GM12878 (cell line): ENCODE measurements at regions of chr3 and their contacts with region 1.

Region 1: DNA sequence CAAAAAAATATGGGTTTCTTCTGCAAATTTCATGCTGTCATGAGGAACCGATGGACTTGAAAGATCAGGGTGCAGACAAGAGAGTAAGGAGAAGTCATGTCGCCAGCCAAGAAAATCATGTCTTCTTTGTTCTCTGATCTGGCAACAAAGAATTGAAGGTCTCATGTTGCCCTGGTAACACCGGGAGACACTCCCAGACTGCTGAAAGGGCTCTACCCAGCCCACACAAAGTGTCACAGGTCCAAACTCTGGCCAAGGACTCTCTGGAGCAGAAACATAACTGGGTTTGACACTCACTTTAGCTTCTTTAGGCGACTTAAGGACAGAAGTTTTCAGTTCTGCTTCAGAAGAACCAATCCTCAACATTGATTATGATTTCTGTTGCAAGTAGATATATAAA is 42.9 kb downstream of the SIDT1 start:
- DNase-seq: no peak
- ATAC-seq: no peak
- H3K4me3 ChIP-seq: no peak overlapping the region
- H3K27ac ChIP-seq: no peak overlapping the region
- H3K4me1 ChIP-seq: no peaks in the 10 kb centered on the region
- H3K27me3 ChIP-seq: no peaks in the 10 kb centered on the region
- CTCF ChIP-seq: no peak
- EP300 ChIP-seq: no peak
- POLR2A ChIP-seq: no peak
- RAD21 ChIP-seq: no peak

Region 2: DNA sequence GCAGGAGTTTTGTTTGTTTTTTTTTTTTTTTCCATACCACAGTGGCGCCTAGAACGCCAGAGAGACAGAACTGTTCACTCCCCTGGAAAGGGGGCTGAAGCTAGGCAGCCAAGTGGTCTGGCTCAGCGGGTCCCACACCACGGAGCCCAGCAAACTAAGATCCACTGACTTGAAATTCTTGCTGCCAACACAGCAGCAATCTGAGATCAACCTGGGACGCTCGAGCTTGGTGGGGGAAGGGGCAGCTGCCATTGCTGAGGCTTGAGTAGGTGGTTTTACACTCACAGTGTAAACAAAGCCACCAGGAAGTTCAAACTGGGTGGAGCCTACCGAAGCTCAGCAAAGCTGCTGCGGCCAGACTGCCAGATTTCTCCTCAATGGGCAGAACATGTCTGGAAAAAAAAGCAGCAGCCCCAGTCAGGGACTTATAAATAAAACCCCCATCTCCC is 90.0 kb before region 1 on chr3:
- CTCF ChIA-PET with region 1: interaction called, 13 read pairs
- POLR2A ChIA-PET with region 1: no interaction called
- RAD21 ChIA-PET with region 1: interaction called, 3 read pairs
- SMC1A ChIA-PET with region 1: interaction called, 9 read pairs
- in situ Hi-C with region 1: loop called (anchors 5 kb)
- intact Hi-C with region 1: no loop called
- DNase-seq: no peak
- ATAC-seq: no peak
- H3K4me3 ChIP-seq: no peak overlapping the region
- H3K27ac ChIP-seq: no peak overlapping the region
- H3K4me1 ChIP-seq: no peaks in the 10 kb centered on the region
- H3K27me3 ChIP-seq: no peaks in the 10 kb centered on the region
- CTCF ChIP-seq: no peak
- EP300 ChIP-seq: no peak
- POLR2A ChIP-seq: no peak
- RAD21 ChIP-seq: no peak

Region 3: GRCh38 chr3:113514265-113514769 is 60.9 kb before region 1 on chr3:
- CTCF ChIA-PET with region 1: interaction called, 49 read pairs
- POLR2A ChIA-PET with region 1: interaction called, 3 read pairs
- RAD21 ChIA-PET with region 1: interaction called, 33 read pairs
- SMC1A ChIA-PET with region 1: interaction called, 39 read pairs
- in situ Hi-C with region 1: no loop called
- intact Hi-C with region 1: no loop called
- DNase-seq: no peak
- ATAC-seq: peak; percentile 9
- H3K4me3 ChIP-seq: peak overlapping the region; percentile 87
- H3K27ac ChIP-seq: peak overlapping the region; percentile 76
- H3K4me1 ChIP-seq: peaks cover 12% of the 10 kb centered on the region
- H3K27me3 ChIP-seq: no peaks in the 10 kb centered on the region
- CTCF ChIP-seq: no peak
- EP300 ChIP-seq: 0 out of 4 replicates have a peak, but pooled peaks of 1 of the 2 experiments have one; percentile 35
- POLR2A ChIP-seq: no peak
- RAD21 ChIP-seq: no peak

Region 4: GRCh38 chr3:113546414-113546893 is 28.8 kb before region 1 on chr3:
- CTCF ChIA-PET with region 1: interaction called, 22 read pairs
- POLR2A ChIA-PET with region 1: no interaction called
- RAD21 ChIA-PET with region 1: interaction called, 7 read pairs
- SMC1A ChIA-PET with region 1: interaction called, 11 read pairs
- in situ Hi-C with region 1: no loop called
- intact Hi-C with region 1: no loop called
- DNase-seq: peak; percentile 57
- ATAC-seq: peak; percentile 88
- H3K4me3 ChIP-seq: peak overlapping the region; percentile 52; the same call in 1 of the 2 replicates
- H3K27ac ChIP-seq: peak overlapping the region; percentile 76
- H3K4me1 ChIP-seq: peaks cover 26% of the 10 kb centered on the region
- H3K27me3 ChIP-seq: no peaks in the 10 kb centered on the region
- CTCF ChIP-seq: no peak
- EP300 ChIP-seq: 0 out of 4 replicates have a peak, but pooled peaks of 1 of the 2 experiments have one; percentile 39
- POLR2A ChIP-seq: no peak
- RAD21 ChIP-seq: no peak

Region 5: DNA sequence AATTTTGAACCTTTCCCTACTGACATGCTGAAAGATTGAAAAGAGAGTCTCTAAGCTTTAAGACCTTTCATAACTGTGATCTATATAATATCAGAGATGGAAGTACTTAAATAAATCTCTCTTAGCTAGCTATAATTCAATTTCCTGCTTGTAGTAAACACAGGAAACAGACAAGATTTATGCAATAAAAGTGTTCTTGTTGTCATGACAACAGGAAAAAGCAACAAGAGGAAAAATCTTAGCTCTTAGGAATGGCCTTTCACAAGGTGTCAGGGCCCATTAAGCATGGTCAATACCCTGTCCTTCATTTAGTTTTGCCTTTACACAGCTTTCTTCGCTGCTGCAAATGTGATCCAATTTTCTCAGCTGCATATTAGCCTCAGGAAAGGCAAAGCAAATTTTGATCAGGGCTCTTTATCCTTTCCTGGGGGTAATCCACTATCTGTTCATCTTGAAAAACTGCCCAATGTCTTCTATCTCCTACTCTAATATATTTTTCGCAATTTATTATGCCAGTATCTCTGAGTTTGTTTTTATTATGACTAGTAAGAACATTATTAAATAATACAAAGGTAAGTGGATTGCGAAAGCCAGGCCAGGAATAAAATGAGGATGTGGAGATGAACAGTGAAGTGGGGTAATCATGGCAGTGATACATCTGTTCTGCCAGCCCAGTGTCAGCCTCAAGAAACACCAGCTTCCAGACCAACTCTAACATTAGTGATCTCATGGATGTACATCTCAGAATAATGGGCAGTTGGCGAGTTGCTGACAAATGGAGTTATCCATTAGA is 14.2 kb before region 1 on chr3:
- CTCF ChIA-PET with region 1: interaction called, 36 read pairs
- POLR2A ChIA-PET with region 1: interaction called, 3 read pairs
- RAD21 ChIA-PET with region 1: interaction called, 4 read pairs
- SMC1A ChIA-PET with region 1: interaction called, 24 read pairs
- in situ Hi-C with region 1: no loop called
- intact Hi-C with region 1: no loop called
- DNase-seq: no peak
- ATAC-seq: no peak
- H3K4me3 ChIP-seq: no peak overlapping the region
- H3K27ac ChIP-seq: no peak overlapping the region
- H3K4me1 ChIP-seq: no peaks in the 10 kb centered on the region; the same call in 1 of the 2 replicates
- H3K27me3 ChIP-seq: no peaks in the 10 kb centered on the region
- CTCF ChIP-seq: no peak
- EP300 ChIP-seq: no peak
- POLR2A ChIP-seq: no peak
- RAD21 ChIP-seq: no peak

Region 6: DNA sequence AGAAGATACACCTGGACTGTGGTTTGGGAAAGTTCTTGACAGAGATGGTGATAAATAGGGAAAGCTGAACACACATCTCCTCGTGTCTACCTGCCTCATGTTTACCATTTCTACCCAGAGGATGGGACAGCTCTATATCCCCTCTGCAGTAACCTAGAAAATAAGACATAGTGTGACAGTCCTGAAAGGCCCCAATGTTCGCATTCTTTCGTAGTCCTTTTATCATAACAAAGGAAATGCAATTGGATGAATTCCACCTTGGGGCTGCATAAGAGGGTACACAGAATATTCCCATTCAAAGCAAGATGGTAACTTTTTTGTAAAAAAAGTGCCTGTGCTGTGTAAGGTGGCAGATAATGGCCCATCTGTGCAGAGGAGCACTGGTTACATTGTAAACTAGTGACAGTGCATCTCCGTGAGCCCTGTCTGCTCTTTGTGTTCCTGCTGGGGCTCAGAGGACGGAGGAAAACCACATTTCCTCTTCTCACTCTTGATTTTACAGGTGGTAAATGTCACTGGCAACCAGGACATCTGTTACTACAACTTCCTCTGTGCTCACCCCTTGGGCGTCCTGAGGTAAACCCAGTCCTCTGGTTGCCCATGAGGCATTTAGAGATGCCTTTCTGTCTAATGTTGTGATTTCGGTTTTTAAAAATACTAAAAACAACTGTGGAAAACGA is 31.5 kb after region 1 on chr3:
- CTCF ChIA-PET with region 1: interaction called, 10 read pairs
- POLR2A ChIA-PET with region 1: no interaction called
- RAD21 ChIA-PET with region 1: no interaction called
- SMC1A ChIA-PET with region 1: interaction called, 10 read pairs
- in situ Hi-C with region 1: no loop called
- intact Hi-C with region 1: no loop called
- DNase-seq: peak; percentile 75
- ATAC-seq: peak; percentile 99
- H3K4me3 ChIP-seq: no peak overlapping the region
- H3K27ac ChIP-seq: peak overlapping the region; percentile 52; the same call in 1 of the 2 replicates
- H3K4me1 ChIP-seq: peaks cover 17% of the 10 kb centered on the region
- H3K27me3 ChIP-seq: no peaks in the 10 kb centered on the region
- CTCF ChIP-seq: no peak
- EP300 ChIP-seq: peak in 1 of 2 experiments; percentile 56; a peak in 1 of 4 replicates
- POLR2A ChIP-seq: no peak
- RAD21 ChIP-seq: no peak

Region 7: DNA sequence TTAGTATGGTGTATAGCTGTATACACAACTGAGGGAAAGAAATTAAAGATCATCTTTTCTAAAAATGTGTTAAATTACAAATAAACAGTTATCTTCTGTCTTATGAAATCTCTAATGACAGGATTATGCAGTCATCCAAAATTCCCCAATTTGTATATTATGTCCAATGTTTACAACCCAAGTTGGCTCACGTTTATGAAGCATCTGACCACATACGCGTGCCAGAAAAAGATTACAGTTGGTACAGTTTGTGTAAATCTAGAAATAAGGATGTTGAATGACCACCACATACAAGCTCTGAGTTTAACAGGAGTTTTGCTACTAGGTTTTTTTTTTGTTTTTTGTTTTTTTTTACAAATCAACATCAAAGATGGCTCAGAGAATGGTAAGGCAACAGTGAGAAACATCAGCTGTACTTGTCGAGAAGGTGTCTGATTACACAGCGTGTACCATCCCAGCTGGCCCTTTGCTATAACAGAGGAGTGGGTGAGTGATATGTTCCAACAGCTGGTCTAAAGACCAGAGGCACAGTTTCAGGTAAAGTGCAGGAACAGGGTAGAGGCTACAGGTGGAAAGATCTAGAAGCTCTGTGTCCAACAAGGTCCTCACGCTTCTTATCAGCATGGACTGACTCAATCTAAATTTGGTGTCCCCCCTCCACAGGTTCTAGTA is 74.1 kb after region 1 on chr3:
- CTCF ChIA-PET with region 1: no interaction called
- POLR2A ChIA-PET with region 1: no interaction called
- RAD21 ChIA-PET with region 1: no interaction called
- SMC1A ChIA-PET with region 1: no interaction called
- in situ Hi-C with region 1: no loop called
- intact Hi-C with region 1: no loop called
- DNase-seq: no peak
- ATAC-seq: no peak
- H3K4me3 ChIP-seq: no peak overlapping the region
- H3K27ac ChIP-seq: no peak overlapping the region
- H3K4me1 ChIP-seq: no peaks in the 10 kb centered on the region
- H3K27me3 ChIP-seq: no peaks in the 10 kb centered on the region
- CTCF ChIP-seq: no peak
- EP300 ChIP-seq: no peak
- POLR2A ChIP-seq: no peak
- RAD21 ChIP-seq: no peak

Region 8: GRCh38 chr3:114290911-114291901 is 716.0 kb after region 1 on chr3:
- CTCF ChIA-PET with region 1: no interaction called
- POLR2A ChIA-PET with region 1: no interaction called
- RAD21 ChIA-PET with region 1: no interaction called
- SMC1A ChIA-PET with region 1: no interaction called
- in situ Hi-C with region 1: no loop called
- intact Hi-C with region 1: no loop called
- DNase-seq: peak; percentile 79
- ATAC-seq: peak; percentile 95
- H3K4me3 ChIP-seq: no peak overlapping the region
- H3K27ac ChIP-seq: peak overlapping the region; percentile 88
- H3K4me1 ChIP-seq: peaks cover 18% of the 10 kb centered on the region
- H3K27me3 ChIP-seq: no peaks in the 10 kb centered on the region
- CTCF ChIP-seq: peak; percentile 92 to 93 (median 93)
- EP300 ChIP-seq: peak; percentile 60 to 79; a peak in 2 of 4 replicates
- POLR2A ChIP-seq: peak; percentile 55
- RAD21 ChIP-seq: peak; percentile 97